Activated CD4-positive, alpha-beta memory T cell treated with anti-CD3 and anti-CD28 coated beads, Interleukin-2, amount 10 ng/mL, durations not matched to agents 7 days and 5 days (primary cell): ENCODE measurements at regions of chr7 and their contacts with region 1.

Region 1: DNA sequence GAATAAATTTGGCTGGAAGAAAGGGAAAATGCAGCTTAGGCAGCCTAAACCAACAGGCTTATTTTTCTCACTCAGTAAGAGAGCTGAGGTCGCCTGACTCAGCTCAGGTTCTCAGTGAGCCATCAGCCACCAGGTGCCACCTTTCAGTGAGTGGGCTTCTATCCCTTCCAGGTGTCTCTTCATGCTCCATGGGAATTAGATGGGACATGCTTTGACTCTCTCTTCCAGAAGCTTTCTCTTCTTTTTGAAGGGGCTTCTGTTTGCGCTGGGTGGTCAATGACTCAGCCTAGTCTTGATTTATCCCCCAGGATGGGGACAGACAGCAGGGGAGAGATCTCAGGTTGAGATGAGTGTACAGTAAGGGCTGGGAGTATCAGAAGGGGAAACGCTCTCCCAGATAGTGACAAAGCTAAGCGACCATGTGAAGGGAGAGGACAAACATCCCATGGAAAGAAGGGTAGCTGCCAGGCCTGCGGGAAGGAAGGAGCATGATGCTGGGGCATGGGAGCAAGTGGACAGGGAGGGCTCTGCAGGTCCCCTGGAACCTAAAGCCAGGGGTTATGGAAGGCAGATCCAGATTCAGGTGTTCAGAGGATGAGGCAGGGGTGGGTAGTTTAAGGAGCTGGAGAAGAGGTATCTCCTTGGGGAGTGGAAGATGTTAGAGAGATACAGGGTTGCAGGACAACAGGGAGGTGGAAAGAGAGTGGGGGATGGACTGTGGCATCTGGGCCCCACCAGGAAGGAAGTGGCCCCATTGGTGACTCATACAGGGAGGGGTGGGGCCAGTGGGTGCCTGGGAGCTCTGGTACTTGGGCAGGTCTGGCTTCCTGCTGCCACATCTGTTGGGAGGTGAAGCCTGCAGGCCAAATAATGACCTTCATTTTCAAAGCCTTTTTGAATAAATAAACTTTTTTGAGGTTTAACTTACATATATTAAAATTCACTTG is 32.5 kb downstream of the OGDH start:
- DNase-seq: peak; percentile 93
- H3K4me3 Mint-ChIP-seq: peak overlapping the region; percentile 73
- H3K27ac Mint-ChIP-seq: peak overlapping the region; percentile 100
- H3K4me1 Mint-ChIP-seq: peaks cover 83% of the 10 kb centered on the region
- H3K27me3 Mint-ChIP-seq: no peaks in the 10 kb centered on the region

Region 2: GRCh38 chr7:44573464-44574286 is 65.2 kb before region 1 on chr7 and contains the start of gene DDX56:
- CTCF ChIA-PET with region 1: no interaction called
- POLR2A ChIA-PET with region 1: interaction called, 34 read pairs
- DNase-seq: peak; percentile 94
- H3K4me3 Mint-ChIP-seq: peak within 1 kb of the TSS; percentile 96
- H3K27ac Mint-ChIP-seq: peak within 1 kb of the TSS; percentile 87
- H3K4me1 Mint-ChIP-seq: peaks cover 44% of the 10 kb centered on the region
- H3K27me3 Mint-ChIP-seq: no peaks in the 10 kb centered on the region
- total RNA-seq, gene DDX56: 59.0 to 59.6 TPM

Region 3: GRCh38 chr7:44587843-44588711 is 50.8 kb before region 1 on chr7:
- CTCF ChIA-PET with region 1: no interaction called
- POLR2A ChIA-PET with region 1: interaction called, 96 read pairs
- DNase-seq: peak; percentile 73
- H3K4me3 Mint-ChIP-seq: no peak overlapping the region
- H3K27ac Mint-ChIP-seq: peak overlapping the region; percentile 31
- H3K4me1 Mint-ChIP-seq: peaks cover 18% of the 10 kb centered on the region
- H3K27me3 Mint-ChIP-seq: peaks cover under 1% of the 10 kb centered on the region

Region 4: DNA sequence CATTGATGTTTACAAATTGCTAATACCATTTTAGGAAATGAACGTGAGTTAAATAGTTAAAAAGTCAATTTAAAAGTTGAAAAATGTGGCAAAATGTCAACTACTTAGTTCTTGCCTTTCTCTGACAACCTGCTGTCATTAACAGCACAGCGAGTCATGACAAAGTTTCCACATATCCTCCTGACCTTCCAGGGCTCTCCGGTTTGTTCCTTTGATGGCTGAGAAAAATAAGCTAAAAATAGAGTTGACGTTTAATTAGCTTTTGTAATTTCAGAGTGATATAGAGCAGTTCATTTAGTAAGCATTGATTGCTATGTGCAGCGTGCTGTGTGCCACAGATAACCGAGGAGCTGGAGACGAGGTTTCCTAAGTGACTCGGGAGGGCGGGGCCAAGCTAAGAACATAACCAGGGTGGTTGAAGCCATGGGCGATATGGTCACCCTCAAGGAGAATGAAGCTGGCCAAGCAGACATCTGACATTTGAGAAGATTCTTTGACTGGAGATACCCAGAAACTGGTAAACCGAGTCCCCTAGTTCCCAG is 15.4 kb after region 1 on chr7:
- CTCF ChIA-PET with region 1: interaction called, 3 read pairs
- POLR2A ChIA-PET with region 1: interaction called, 15 read pairs
- DNase-seq: no peak
- H3K4me3 Mint-ChIP-seq: no peak overlapping the region
- H3K27ac Mint-ChIP-seq: no peak overlapping the region
- H3K4me1 Mint-ChIP-seq: peaks cover 2% of the 10 kb centered on the region
- H3K27me3 Mint-ChIP-seq: no peaks in the 10 kb centered on the region

Region 5: DNA sequence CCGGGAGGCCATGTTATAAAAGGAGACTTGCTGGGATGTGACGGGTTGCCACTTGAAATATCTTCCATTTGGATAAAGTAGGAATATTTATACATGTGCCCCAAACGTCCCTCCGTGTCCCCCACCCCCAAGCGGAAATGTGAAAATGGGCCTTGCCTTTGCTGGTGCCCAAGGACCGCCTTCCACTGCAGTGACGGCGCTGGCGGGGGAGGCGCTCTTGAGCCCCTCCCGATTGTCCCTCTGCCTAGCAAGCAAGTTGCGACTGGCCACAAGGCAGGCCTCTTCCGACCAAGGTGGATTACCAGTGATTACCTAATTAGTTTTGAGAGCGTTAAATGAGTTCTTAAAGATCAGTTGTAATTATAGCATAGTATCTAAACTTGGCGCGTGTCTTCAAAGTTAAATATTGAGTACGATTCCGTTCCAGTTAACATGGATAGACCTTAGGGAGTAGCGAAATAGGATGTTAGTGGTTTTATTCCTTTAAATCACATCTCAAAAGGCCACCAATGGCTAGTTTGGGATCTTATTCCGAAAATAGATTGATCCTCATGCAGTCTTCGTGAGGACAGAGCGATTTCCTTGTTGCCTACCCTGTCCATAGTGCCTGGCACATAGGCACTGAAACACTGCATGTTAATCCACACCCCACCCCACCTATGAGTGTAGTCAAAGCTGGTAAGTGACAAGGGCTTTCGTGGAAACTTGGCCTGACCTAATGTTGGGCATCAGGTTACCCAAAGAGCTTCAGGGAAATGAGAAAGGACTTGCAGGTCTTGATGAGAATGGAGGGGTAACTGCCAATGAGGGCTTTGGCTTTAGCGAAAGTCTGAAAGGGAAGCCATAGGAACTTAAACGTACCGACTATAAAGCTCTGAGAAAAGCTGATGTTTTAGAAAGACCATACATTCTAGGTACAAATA is 158.7 kb after region 1 on chr7:
- CTCF ChIA-PET with region 1: interaction called, 3 read pairs
- POLR2A ChIA-PET with region 1: interaction called, 122 read pairs
- DNase-seq: peak; percentile 89
- H3K4me3 Mint-ChIP-seq: peak overlapping the region; percentile 81
- H3K27ac Mint-ChIP-seq: peak overlapping the region; percentile 93
- H3K4me1 Mint-ChIP-seq: peaks cover 44% of the 10 kb centered on the region
- H3K27me3 Mint-ChIP-seq: no peaks in the 10 kb centered on the region

Region 6: GRCh38 chr7:45026984-45027773 is 388.3 kb after region 1 on chr7:
- CTCF ChIA-PET with region 1: no interaction called
- POLR2A ChIA-PET with region 1: interaction called, 12 read pairs
- DNase-seq: peak; percentile 46
- H3K4me3 Mint-ChIP-seq: peak overlapping the region; percentile 83
- H3K27ac Mint-ChIP-seq: peak overlapping the region; percentile 81
- H3K4me1 Mint-ChIP-seq: peaks cover 64% of the 10 kb centered on the region
- H3K27me3 Mint-ChIP-seq: no peaks in the 10 kb centered on the region